HEK293T (cell line): ENCODE measurements at regions of chr5 and their contacts with region 1.

Region 1: GRCh38 chr5:172707285-172708182 is 63.5 kb downstream of the DUSP1 start:
- DNase-seq: peak; percentile 74

Region 2: GRCh38 chr5:172932313-172933017 is 224.9 kb after region 1 on chr5:
- CTCF ChIA-PET with region 1: interaction called, 61 read pairs
- POLR2A ChIA-PET with region 1: no interaction called
- DNase-seq: peak; percentile 89

Region 3: DNA sequence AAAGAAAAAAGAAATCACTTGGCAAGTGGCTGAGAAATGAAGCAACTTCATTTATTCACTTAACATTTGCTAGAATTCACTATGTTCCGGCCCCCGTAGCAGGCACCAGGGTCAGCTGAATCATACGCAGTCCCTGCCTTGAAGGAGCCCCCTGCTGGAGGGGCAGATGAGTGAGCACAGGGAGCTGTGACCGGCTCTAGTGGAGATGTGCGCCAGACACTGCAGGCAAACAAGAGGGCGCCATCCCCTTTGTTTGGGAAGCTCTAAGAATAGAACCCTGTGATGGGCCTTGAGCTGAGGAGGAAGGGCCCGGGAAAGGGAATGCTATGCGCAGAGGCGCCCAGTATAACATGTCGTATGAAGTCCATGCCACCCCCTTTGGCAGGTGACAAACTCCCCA is 231.5 kb after region 1 on chr5:
- CTCF ChIA-PET with region 1: interaction called, 61 read pairs
- POLR2A ChIA-PET with region 1: no interaction called
- DNase-seq: peak; percentile 59